ENCODE measurements at regions of chr16 and their contacts with region 1.

Region 1: DNA sequence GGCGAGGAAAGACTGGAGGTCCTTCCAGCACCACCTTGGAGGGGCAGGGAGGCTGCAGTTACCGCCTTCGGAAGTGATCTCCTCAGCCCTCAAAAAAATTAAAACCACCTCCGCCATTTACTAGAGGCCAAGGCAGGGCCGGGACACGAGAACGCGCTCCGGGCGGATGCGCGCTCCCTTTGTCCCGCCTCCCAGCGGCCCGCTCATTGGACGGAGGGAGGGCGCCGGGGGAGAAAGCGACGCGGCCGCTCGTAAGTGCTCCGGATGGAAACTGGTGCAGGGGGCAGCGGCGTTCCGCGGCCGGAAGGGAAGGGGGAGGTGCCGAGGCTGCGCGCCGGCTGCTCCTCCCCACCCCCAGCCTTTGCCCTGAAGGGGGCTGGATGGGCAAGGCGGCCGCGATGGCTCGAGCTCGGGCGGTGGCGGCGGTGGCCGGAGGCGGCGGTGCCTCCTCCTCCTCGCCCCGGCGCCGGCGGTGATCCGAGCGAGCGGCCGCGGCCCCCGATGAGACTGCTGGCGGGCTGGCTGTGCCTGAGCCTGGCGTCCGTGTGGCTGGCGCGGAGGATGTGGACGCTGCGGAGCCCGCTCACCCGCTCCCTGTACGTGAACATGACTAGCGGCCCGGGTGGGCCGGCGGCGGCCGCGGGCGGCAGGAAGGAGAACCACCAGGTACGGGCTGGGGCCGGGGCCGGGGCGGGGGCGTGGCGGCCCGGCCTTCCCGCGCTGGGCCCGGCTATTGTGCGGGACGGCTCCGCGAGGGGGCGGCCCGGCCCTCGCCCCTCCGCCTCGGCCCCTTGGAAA is at the start of gene METTL9:
- DNase-seq: peak; percentile 94
- ATAC-seq: peak; percentile 93
- H3K4me3 ChIP-seq: peak within 1 kb of the TSS; percentile 79 to 99 (median 95)
- H3K27ac ChIP-seq: peak within 1 kb of the TSS; percentile 92
- H3K4me1 ChIP-seq: peaks cover 62% of the 10 kb centered on the region
- H3K27me3 ChIP-seq: peaks cover 0 to 3% of the 10 kb centered on the region in 2 experiments; a peak in 1 of 5 replicates
- CTCF ChIP-seq: peak; percentile 58
- EP300 ChIP-seq: peak; percentile 77 to 83
- POLR2A ChIP-seq: peak; percentile 96
- RAD21 ChIP-seq: peak; percentile 84
- total RNA-seq, gene METTL9: 175 and 204 TPM in 2 replicates

Region 2: DNA sequence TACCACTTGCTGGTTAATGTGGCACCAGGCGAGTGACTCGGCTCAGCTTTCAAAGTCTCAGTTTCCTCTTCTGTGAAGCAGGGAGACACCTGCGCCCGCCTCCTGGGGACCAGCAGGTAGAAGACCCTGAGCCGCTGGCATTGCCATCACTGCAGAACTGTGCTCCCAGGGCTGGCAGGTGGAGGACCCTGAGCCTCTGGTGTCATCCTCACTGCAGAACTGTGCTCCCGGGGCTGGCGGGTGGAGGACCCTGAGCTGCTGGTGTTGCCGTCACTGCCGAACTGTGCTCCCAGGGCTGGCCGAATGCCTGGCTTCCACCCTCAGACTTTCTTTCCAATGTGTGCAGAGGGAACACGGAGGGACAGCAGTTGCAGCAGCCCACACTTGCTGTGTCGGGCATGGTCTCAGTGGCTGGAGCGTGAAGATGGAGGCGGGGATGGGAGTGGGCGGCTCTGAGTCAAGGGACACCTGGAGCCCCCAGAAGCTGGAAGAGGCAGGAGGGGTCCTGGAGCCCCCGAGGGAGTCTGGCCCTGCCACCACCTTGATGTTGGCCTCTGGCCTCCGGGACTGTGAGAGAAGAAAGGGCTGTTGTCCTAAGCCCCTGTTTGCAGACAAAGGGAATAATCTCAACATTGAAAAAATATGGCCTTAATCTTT is 75.9 kb before region 1 on chr16:
- CTCF ChIA-PET with region 1: no interaction called
- POLR2A ChIA-PET with region 1: no interaction called
- in situ Hi-C with region 1: loop called (anchors 10 kb)
- intact Hi-C with region 1: no loop called
- DNase-seq: peak; percentile 80
- ATAC-seq: no peak
- H3K4me3 ChIP-seq: peak overlapping the region; percentile 4 to 58 (median 5); a peak in 5 of 6 replicates
- H3K27ac ChIP-seq: peak overlapping the region; percentile 6
- H3K4me1 ChIP-seq: peaks cover 73% of the 10 kb centered on the region
- H3K27me3 ChIP-seq: peaks cover 4 to 8% of the 10 kb centered on the region in 2 experiments; a peak in 2 of 5 replicates
- CTCF ChIP-seq: no peak
- EP300 ChIP-seq: 0 out of 4 replicates have a peak, but pooled peaks of 1 of the 2 experiments have one; percentile 7
- POLR2A ChIP-seq: 0 out of 4 replicates have a peak, but pooled peaks of 1 of the 2 experiments have one; percentile 36
- RAD21 ChIP-seq: peak; percentile 16

Region 3: GRCh38 chr16:21638573-21638975 is 39.1 kb after region 1 on chr16:
- CTCF ChIA-PET with region 1: no interaction called
- POLR2A ChIA-PET with region 1: interaction called, 4 read pairs
- in situ Hi-C with region 1: loop called (anchors 5 kb)
- intact Hi-C with region 1: loop called (anchors 1 kb)
- DNase-seq: peak; percentile 91
- ATAC-seq: peak; percentile 93
- H3K4me3 ChIP-seq: no peak overlapping the region
- H3K27ac ChIP-seq: no peak overlapping the region
- H3K4me1 ChIP-seq: peaks cover 29% of the 10 kb centered on the region
- H3K27me3 ChIP-seq: no peaks in the 10 kb centered on the region
- CTCF ChIP-seq: no peak
- EP300 ChIP-seq: peak; percentile 91 to 93; a peak in 3 of 4 replicates
- POLR2A ChIP-seq: no peak
- RAD21 ChIP-seq: peak; percentile 38; the same call in 1 of the 2 replicates

Measured in HepG2 (cell line).